MCF 10A (cell line): ENCODE measurements at regions of chr10 and their contacts with region 1.

Region 1: DNA sequence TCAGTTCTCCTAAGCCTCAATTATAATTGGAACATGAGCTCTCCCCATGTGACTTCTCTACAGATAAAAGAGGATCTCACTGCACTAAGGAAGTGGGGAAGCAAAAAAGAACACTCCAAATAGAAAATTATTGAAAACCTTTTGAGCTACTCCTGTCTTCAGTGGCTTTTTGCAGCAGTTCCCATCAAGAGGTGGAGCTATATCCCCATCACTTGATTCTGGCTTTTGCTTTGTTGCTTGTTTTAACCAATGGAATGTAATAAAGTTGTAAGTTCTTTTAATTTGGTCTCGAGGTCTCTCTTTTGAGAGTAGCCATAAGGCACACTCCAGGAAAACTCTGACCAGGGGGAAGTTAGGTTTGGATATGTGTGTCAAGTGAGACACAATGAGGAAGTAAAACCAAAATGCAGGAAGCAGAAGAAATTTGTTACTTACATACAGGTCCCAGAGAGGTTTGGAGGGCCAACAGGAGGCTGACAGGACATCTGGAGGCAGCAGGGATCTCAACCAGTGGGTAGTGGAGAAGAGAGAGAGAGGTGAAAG is 569.4 kb downstream of the HTR7 start:
- DNase-seq: peak; percentile 42
- H3K4me3 Mint-ChIP-seq: no peak overlapping the region
- H3K27ac Mint-ChIP-seq: no peak overlapping the region
- H3K4me1 Mint-ChIP-seq: peaks cover 25% of the 10 kb centered on the region
- H3K27me3 Mint-ChIP-seq: no peaks in the 10 kb centered on the region
- CTCF ChIP-seq: peak; percentile 31

Region 2: DNA sequence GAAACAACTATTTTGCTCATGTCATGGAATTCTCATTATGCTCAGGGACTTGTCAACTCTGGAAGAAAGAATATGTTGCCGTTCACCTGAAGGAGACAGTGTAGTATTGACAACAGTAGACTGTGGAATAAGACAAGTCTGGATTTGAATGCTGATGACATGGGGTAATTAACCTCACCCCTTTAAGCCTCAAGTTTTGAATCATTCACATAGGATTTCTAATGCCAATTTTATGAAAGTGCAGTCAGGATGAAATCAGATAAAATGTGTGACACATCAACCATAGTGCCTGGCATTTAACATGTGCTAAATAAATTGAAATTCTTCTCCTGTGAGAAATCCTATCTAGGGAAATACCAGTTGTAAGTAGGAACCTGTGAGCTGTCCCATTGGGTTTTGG is 281.2 kb before region 1 on chr10:
- CTCF ChIA-PET with region 1: no interaction called
- POLR2A ChIA-PET with region 1: no interaction called
- intact Hi-C with region 1: loop called (anchors 5 kb)
- DNase-seq: peak; percentile 71
- H3K4me3 Mint-ChIP-seq: no peak overlapping the region
- H3K27ac Mint-ChIP-seq: peak overlapping the region; percentile 57
- H3K4me1 Mint-ChIP-seq: peaks cover 7% of the 10 kb centered on the region
- H3K27me3 Mint-ChIP-seq: no peaks in the 10 kb centered on the region
- CTCF ChIP-seq: no peak

Region 3: DNA sequence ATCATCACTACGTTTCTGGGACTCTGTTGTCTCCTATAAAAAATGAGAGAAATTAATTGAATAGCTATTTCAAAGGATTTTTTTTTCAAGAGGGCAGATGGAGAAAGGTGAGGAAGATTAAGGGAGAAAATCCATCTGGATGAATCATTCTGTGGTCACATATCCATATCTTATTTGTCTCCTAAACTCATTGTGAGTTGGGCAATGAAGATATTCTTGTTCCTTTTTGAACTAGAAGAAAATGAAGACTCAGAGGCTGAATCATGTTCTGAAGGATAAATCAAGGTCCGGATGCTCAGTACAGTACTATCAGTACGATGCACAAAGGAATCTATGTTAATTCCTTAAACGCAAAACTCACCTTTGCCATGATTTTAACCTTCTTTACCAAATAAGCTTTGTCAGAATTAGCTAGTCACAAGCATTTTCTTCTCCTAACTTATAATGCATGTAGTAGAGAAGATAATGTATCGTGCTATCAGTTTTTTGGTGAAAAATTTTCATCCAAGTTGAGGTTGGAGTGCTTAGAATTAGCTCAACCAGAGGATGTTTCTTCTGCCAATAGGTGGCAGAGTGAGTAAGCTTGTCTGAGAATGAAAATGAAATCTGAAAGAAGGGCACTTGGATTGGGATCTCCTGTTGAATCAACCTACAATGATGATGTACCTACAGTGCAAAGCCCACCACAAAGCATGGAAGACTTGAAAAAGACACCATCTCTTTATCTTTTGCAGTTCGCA is 140.2 kb before region 1 on chr10:
- CTCF ChIA-PET with region 1: interaction called, 6 read pairs
- POLR2A ChIA-PET with region 1: no interaction called
- intact Hi-C with region 1: loop called (anchors 2 kb)
- DNase-seq: peak; percentile 60
- H3K4me3 Mint-ChIP-seq: no peak overlapping the region
- H3K27ac Mint-ChIP-seq: peak overlapping the region; percentile 44
- H3K4me1 Mint-ChIP-seq: peaks cover 14% of the 10 kb centered on the region
- H3K27me3 Mint-ChIP-seq: no peaks in the 10 kb centered on the region
- CTCF ChIP-seq: peak; percentile 57

Region 4: GRCh38 chr10:90560331-90560730 is 271.9 kb after region 1 on chr10:
- CTCF ChIA-PET with region 1: no interaction called
- POLR2A ChIA-PET with region 1: no interaction called
- intact Hi-C with region 1: no loop called
- DNase-seq: no peak
- H3K4me3 Mint-ChIP-seq: no peak overlapping the region
- H3K27ac Mint-ChIP-seq: no peak overlapping the region
- H3K4me1 Mint-ChIP-seq: no peaks in the 10 kb centered on the region
- H3K27me3 Mint-ChIP-seq: no peaks in the 10 kb centered on the region
- CTCF ChIP-seq: no peak

Region 5: GRCh38 chr10:90674928-90675327 is 386.5 kb after region 1 on chr10:
- CTCF ChIA-PET with region 1: no interaction called
- POLR2A ChIA-PET with region 1: no interaction called
- intact Hi-C with region 1: no loop called
- DNase-seq: peak; percentile 73
- H3K4me3 Mint-ChIP-seq: peak overlapping the region; percentile 17
- H3K27ac Mint-ChIP-seq: peak overlapping the region; percentile 78
- H3K4me1 Mint-ChIP-seq: peaks cover 18% of the 10 kb centered on the region
- H3K27me3 Mint-ChIP-seq: no peaks in the 10 kb centered on the region
- CTCF ChIP-seq: no peak